Posterior cingulate gyrus (tissue), 11 donors: ENCODE measurements at regions of chr5 and their contacts with region 1.

Region 1: GRCh38 chr5:54443270-54443669 is 12.2 kb upstream of the HSPB3 start:
- DNase-seq: no peak

Region 2: DNA sequence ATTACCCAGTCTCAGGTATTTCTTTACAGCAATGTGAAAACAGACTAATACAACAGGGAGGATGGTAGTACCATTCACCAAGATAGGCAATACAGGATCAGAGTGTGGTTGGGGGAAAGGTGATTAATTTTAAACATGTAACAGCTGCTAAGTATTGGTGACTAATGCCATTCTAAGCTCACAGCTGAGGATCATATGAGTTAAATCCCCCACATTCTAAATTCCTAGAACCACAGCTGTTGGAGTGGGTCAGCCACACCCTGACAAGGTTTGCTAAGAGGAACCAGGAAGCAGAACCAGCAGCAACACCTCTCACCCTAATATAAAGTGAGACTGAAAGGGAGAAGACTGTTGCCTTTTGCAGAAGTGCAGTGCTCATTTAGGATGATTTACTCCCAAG is 37.0 kb after region 1 on chr5:
- intact Hi-C with region 1: loop called (anchors 5 kb)
- DNase-seq: no peak

Region 3: GRCh38 chr5:54883374-54884212 is 440.3 kb after region 1 on chr5:
- intact Hi-C with region 1: no loop called
- DNase-seq: peak in 2 of 10 donors; percentile 76 to 83